ENCODE measurements at regions of chr3 and their contacts with region 1.

Region 1: GRCh38 chr3:46566036-46566641 is at the start of gene LRRC2:
- DNase-seq: peak; percentile 84
- total RNA-seq, gene LRRC2: 70.6 TPM

Region 2: GRCh38 chr3:46660543-46661523 is 94.7 kb after region 1 on chr3:
- intact Hi-C with region 1: loop called (anchors 1 kb)
- DNase-seq: peak; percentile 81

Region 3: GRCh38 chr3:46778101-46778500 is 212.0 kb after region 1 on chr3:
- intact Hi-C with region 1: no loop called
- DNase-seq: no peak

Region 4: GRCh38 chr3:46860017-46860830 is 294.1 kb after region 1 on chr3:
- intact Hi-C with region 1: loop called (anchors 1 kb)
- DNase-seq: peak; percentile 75

Measured in cardiac septum (tissue), 1 donor.